HCT116 (cell line): ENCODE measurements at regions of chr9 and their contacts with region 1.

Region 1: GRCh38 chr9:91422758-91423711 is 597 bp downstream of the NFIL3 start:
- DNase-seq: no peak
- ATAC-seq: peak; percentile 46
- H3K4me3 ChIP-seq: peak overlapping the region; percentile 90 to 92
- H3K27ac ChIP-seq: peak overlapping the region; percentile 63
- H3K4me1 ChIP-seq: peaks cover 50 to 70% of the 10 kb centered on the region in 2 experiments
- H3K27me3 ChIP-seq: no peaks in the 10 kb centered on the region
- CTCF ChIP-seq: 0 out of 6 replicates have a peak, but pooled peaks of 1 of the 3 experiments have one; percentile 7
- POLR2A ChIP-seq: no peak
- RAD21 ChIP-seq: no peak

Region 2: DNA sequence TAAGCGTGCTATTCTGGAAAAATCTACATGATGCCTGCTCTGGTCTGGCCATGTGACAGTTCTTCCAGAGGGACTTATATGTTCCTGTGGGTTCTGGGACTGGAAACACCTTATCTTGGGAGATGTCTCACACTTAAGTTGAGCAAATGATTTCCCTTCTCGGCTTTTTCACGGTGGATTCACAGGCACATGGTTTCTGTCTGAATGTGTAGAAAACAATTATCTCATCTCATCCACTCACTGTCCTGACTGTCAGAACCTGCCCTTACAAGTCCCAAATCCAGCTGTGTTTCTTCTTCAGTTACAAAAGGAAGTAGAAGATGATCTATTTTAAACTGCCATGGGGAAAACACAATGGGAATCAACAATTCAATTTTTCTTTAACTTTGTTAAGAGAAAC is 437.4 kb before region 1 on chr9:
- CTCF ChIA-PET with region 1: interaction called, 14 read pairs
- POLR2A ChIA-PET with region 1: no interaction called
- RAD21 ChIA-PET with region 1: interaction called, 5 to 6 read pairs
- intact Hi-C with region 1: loop called (anchors 1 kb)
- DNase-seq: no peak
- ATAC-seq: peak; percentile 43
- H3K4me3 ChIP-seq: no peak overlapping the region
- H3K27ac ChIP-seq: no peak overlapping the region
- H3K4me1 ChIP-seq: peaks cover 0 to 3% of the 10 kb centered on the region in 2 experiments; a peak in 1 of 4 replicates
- H3K27me3 ChIP-seq: no peaks in the 10 kb centered on the region
- CTCF ChIP-seq: no peak
- POLR2A ChIP-seq: no peak
- RAD21 ChIP-seq: no peak

Region 3: DNA sequence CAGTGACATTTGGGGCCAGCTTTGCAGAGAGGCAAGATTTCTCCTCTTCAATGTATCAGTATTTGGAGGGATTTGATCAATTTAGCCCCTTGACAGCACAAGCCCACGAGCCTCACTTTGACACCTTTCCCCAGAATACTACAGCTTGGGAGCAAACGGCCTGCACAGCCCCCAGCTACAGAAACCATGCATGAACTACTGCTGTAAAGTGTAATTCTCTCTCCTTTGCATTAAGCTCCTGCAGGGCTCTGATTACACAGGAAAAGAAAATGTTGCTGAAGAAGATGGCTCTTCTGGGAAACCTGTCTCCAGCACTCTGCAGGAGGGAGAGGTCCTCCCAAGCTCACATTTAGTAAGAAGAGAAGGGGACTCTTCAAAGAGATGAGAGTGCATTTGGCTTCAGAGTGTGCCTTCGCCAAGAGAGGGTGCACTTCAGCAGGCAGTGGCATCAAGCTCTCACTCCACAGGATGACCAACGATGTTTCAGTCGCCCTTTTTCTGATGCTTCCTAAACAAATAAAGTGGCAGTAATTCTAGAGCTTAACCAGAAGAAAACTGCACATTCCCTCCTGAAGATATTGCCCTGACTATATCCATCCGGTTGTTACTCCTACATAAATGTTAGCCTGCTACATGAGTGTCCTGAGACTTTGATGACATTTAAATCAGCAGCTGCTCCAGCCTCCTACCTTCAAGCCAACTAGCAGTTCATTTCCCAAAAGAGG is 333.5 kb before region 1 on chr9:
- CTCF ChIA-PET with region 1: interaction called, 8 read pairs
- POLR2A ChIA-PET with region 1: no interaction called
- RAD21 ChIA-PET with region 1: interaction called in 1 of 2 experiments, 4 read pairs
- intact Hi-C with region 1: loop called (anchors 1 kb)
- DNase-seq: no peak
- ATAC-seq: peak; percentile 80
- H3K4me3 ChIP-seq: no peak overlapping the region
- H3K27ac ChIP-seq: no peak overlapping the region
- H3K4me1 ChIP-seq: no peaks in the 10 kb centered on the region
- H3K27me3 ChIP-seq: no peaks in the 10 kb centered on the region
- CTCF ChIP-seq: peak; percentile 39 to 55 (median 39); a peak in 5 of 6 replicates
- POLR2A ChIP-seq: no peak
- RAD21 ChIP-seq: peak; percentile 92

Region 4: DNA sequence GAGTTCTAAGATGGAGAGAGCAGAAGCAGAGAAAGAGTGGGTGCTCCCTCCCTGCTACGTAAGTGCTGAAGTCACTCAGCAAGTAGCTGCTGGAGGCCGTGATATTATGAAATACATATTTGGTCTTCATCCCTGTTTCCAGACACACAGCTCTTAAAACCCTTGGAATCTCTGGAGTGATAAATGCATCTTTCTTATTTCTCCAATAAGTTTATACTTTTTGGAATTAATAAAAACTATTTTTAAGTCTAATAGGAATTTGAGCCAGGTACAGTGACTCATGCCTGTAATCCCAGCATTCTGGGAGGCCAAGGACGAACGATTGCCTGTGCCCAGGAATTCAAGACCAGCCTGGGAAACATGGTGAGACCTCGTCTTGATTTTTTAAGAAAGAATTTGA is 121.9 kb before region 1 on chr9:
- CTCF ChIA-PET with region 1: no interaction called
- POLR2A ChIA-PET with region 1: no interaction called
- RAD21 ChIA-PET with region 1: no interaction called
- intact Hi-C with region 1: loop called (anchors 5 kb)
- DNase-seq: peak; percentile 23
- ATAC-seq: peak; percentile 44
- H3K4me3 ChIP-seq: peak overlapping the region in 1 of 2 experiments; percentile 19; a peak in 1 of 4 replicates
- H3K27ac ChIP-seq: peak overlapping the region; percentile 93
- H3K4me1 ChIP-seq: peaks cover 45 to 61% of the 10 kb centered on the region in 2 experiments
- H3K27me3 ChIP-seq: no peaks in the 10 kb centered on the region
- CTCF ChIP-seq: no peak
- POLR2A ChIP-seq: no peak
- RAD21 ChIP-seq: no peak

Region 5: DNA sequence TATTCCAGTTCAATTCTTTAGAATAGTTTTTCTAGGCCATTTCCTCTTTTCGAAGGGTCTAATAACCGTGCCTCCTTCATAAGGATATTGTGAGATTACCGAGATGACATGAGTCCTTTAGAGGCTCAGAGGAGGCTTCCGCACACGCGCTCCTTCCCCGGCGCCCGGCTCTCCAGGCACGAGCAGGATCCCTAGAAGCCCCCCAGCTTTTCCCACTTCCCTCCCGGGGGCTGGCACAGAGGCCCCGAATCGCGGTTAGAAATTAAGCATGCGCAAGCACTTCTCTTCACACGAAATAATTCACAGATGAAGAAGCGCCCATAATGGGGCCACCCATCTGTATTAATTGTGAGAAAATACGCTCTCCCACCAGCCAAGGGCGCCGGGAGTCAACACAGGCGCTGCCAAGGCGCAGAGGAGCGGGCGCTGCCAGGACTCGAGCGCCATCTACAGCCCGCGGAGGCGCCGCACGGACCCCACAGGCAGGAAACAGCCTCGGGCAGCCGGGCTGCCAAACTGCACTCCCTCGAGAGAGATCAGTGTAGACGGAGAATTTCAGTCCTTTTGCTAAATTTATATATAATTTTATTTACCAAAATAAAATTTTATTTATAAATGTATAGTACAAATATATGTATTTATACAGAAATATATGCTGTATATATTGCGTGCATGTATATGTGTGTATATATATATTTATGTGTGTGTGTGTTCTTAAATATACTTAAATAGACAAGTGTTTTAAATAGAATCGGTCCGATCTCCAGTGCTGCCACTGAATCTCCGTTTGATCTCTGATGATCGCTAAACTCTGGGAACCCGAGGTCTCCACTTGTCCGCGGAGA is 258.6 kb after region 1 on chr9:
- CTCF ChIA-PET with region 1: no interaction called
- POLR2A ChIA-PET with region 1: no interaction called
- RAD21 ChIA-PET with region 1: no interaction called
- intact Hi-C with region 1: loop called (anchors 5 kb)
- DNase-seq: peak; percentile 45
- ATAC-seq: peak; percentile 100
- H3K4me3 ChIP-seq: no peak overlapping the region
- H3K27ac ChIP-seq: no peak overlapping the region
- H3K4me1 ChIP-seq: no peaks in the 10 kb centered on the region; a peak in 1 of 4 replicates
- H3K27me3 ChIP-seq: no peaks in the 10 kb centered on the region
- CTCF ChIP-seq: peak; percentile 87 to 98 (median 94)
- POLR2A ChIP-seq: no peak
- RAD21 ChIP-seq: peak; percentile 94